Activated T-helper 1 cell treated with anti-CD3 and anti-CD28 coated beads, Interleukin-12 subunit alpha, Interleukin-12 subunit beta, Interleukin-2, Interleukin-4 antibody, amounts not matched to agents 30 ng/mL and 10 ng/mL and 1 ng/mL, durations not matched to agents 14 hours and 24 hours and 36 hours (primary cell): ENCODE measurements at regions of chrX and their contacts with region 1.

Region 1: GRCh38 chrX:43750248-43750676 is 94.2 kb downstream of the MAOA start:
- DNase-seq: peak; percentile 3
- H3K4me3 Mint-ChIP-seq: no peak overlapping the region
- H3K27ac Mint-ChIP-seq: no peak overlapping the region
- H3K4me1 Mint-ChIP-seq: peaks cover 4% of the 10 kb centered on the region
- H3K27me3 Mint-ChIP-seq: peaks cover 1% of the 10 kb centered on the region

Region 2: GRCh38 chrX:43349363-43349762 is 400.9 kb before region 1 on chrX:
- intact Hi-C with region 1: loop called (anchors 1 kb)
- DNase-seq: no peak
- H3K4me3 Mint-ChIP-seq: no peak overlapping the region
- H3K27ac Mint-ChIP-seq: no peak overlapping the region
- H3K4me1 Mint-ChIP-seq: no peaks in the 10 kb centered on the region
- H3K27me3 Mint-ChIP-seq: peaks cover 2% of the 10 kb centered on the region

Region 3: DNA sequence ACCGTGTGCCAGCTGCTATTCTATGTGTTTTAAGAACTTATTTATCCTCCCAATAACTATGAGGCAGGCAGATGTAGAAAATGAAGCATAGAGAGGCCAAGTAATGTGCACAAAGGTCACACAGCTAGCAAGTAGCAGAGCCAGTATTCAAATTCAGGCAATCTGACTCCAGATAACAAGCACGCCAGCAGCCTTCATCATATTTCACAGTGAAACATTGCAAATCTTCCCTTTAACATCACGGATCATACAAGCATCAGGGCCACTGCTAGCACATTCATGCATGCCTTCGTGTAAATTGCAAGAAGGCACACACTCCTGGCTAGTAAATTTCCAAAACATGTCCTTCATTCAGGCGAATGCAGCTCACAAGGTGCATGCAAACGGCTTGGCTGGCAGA is 98.9 kb after region 1 on chrX:
- intact Hi-C with region 1: no loop called
- DNase-seq: no peak
- H3K4me3 Mint-ChIP-seq: no peak overlapping the region
- H3K27ac Mint-ChIP-seq: no peak overlapping the region
- H3K4me1 Mint-ChIP-seq: no peaks in the 10 kb centered on the region
- H3K27me3 Mint-ChIP-seq: no peaks in the 10 kb centered on the region